ENCODE measurements at regions of chr12 and their contacts with region 1.

Region 1: GRCh38 chr12:98490501-98491453 is 24.6 kb upstream of the TMPO start:
- DNase-seq: peak; percentile 90
- ATAC-seq: peak; percentile 87
- H3K4me3 ChIP-seq: peak overlapping the region; percentile 31 to 60 (median 34); a peak in 5 of 6 replicates
- H3K27ac ChIP-seq: peak overlapping the region; percentile 76
- H3K4me1 ChIP-seq: peaks cover 56% of the 10 kb centered on the region
- H3K27me3 ChIP-seq: no peaks in the 10 kb centered on the region
- CTCF ChIP-seq: peak; percentile 93
- EP300 ChIP-seq: peak in 1 of 2 experiments; percentile 48; a peak in 2 of 4 replicates
- POLR2A ChIP-seq: peak; percentile 54; a peak in 1 of 4 replicates
- RAD21 ChIP-seq: peak; percentile 78

Region 2: GRCh38 chr12:98431089-98431488 is 59.7 kb before region 1 on chr12:
- CTCF ChIA-PET with region 1: no interaction called
- POLR2A ChIA-PET with region 1: no interaction called
- in situ Hi-C with region 1: no loop called
- intact Hi-C with region 1: no loop called
- DNase-seq: no peak
- ATAC-seq: no peak
- H3K4me3 ChIP-seq: no peak overlapping the region
- H3K27ac ChIP-seq: no peak overlapping the region
- H3K4me1 ChIP-seq: no peaks in the 10 kb centered on the region
- H3K27me3 ChIP-seq: no peaks in the 10 kb centered on the region
- CTCF ChIP-seq: no peak
- EP300 ChIP-seq: no peak
- POLR2A ChIP-seq: no peak
- RAD21 ChIP-seq: no peak

Region 3: DNA sequence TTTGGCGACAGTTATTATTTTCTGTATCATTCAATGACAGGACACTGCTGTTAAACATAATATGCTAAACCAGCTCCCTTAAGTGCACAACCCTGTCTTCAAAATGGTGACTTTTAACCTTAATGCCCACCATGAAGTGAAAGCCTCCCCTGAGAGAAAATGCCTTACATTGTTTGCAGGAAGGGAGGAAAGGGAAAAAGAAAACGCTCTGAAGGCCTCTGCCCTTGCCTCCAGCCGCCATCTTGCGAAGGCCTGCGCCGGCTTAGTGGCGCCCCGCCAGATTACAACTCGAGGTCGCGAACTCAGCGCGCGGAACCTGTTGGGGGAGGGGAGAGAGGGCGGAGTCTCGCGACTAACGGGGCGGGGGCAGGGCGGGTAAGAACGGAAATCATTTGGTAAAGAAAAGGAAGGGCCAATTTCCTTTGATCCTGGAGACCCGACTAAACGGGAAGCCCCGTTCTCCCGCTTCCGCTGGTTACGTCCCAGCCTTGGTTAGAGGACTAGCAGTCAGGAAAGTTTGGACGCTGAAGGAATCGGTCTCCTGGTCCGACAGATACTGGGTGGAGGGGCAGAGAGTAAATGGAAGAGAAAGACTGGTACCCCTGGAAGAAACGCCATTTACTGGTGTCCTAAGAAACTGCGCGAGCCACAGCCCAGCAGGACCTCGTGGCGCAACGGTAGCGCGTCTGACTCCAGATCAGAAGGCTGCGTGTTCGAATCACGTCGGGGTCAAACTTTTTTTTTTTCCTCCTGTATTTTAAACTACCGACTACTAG is 13.0 kb after region 1 on chr12:
- CTCF ChIA-PET with region 1: interaction called, 6 read pairs
- POLR2A ChIA-PET with region 1: interaction called, 21 read pairs
- in situ Hi-C with region 1: no loop called
- intact Hi-C with region 1: loop called (anchors 1 kb)
- DNase-seq: peak; percentile 84
- ATAC-seq: peak; percentile 58
- H3K4me3 ChIP-seq: peak overlapping the region; percentile 72 to 77 (median 77)
- H3K27ac ChIP-seq: peak overlapping the region; percentile 99
- H3K4me1 ChIP-seq: peaks cover 39% of the 10 kb centered on the region
- H3K27me3 ChIP-seq: no peaks in the 10 kb centered on the region; a peak in 1 of 5 replicates
- CTCF ChIP-seq: peak; percentile 38
- EP300 ChIP-seq: peak in 1 of 2 experiments; percentile 25; a peak in 3 of 4 replicates
- POLR2A ChIP-seq: peak; percentile 65 to 74
- RAD21 ChIP-seq: peak; percentile 4; the same call in 1 of the 2 replicates

Region 4: GRCh38 chr12:98516184-98516873 is 25.6 kb after region 1 on chr12:
- CTCF ChIA-PET with region 1: interaction called, 21 read pairs
- POLR2A ChIA-PET with region 1: interaction called, 7 read pairs
- in situ Hi-C with region 1: no loop called
- intact Hi-C with region 1: loop called (anchors 1 kb)
- DNase-seq: peak; percentile 88
- ATAC-seq: peak; percentile 52
- H3K4me3 ChIP-seq: peak overlapping the region; percentile 82 to 94 (median 84)
- H3K27ac ChIP-seq: peak overlapping the region; percentile 99
- H3K4me1 ChIP-seq: peaks cover 41% of the 10 kb centered on the region
- H3K27me3 ChIP-seq: no peaks in the 10 kb centered on the region; a peak in 1 of 5 replicates
- CTCF ChIP-seq: peak; percentile 69
- EP300 ChIP-seq: no peak; a peak in 1 of 4 replicates
- POLR2A ChIP-seq: peak; percentile 17 to 45; a peak in 1 of 4 replicates
- RAD21 ChIP-seq: peak; percentile 58

Region 5: GRCh38 chr12:98532681-98533304 is 42.0 kb after region 1 on chr12:
- CTCF ChIA-PET with region 1: interaction called, 8 read pairs
- POLR2A ChIA-PET with region 1: no interaction called
- in situ Hi-C with region 1: no loop called
- intact Hi-C with region 1: loop called (anchors 1 kb)
- DNase-seq: peak; percentile 59
- ATAC-seq: peak; percentile 81
- H3K4me3 ChIP-seq: no peak overlapping the region
- H3K27ac ChIP-seq: no peak overlapping the region
- H3K4me1 ChIP-seq: peaks cover 17% of the 10 kb centered on the region
- H3K27me3 ChIP-seq: no peaks in the 10 kb centered on the region
- CTCF ChIP-seq: peak; percentile 45
- EP300 ChIP-seq: no peak
- POLR2A ChIP-seq: no peak
- RAD21 ChIP-seq: peak; percentile 18; the same call in 1 of the 2 replicates

Region 6: DNA sequence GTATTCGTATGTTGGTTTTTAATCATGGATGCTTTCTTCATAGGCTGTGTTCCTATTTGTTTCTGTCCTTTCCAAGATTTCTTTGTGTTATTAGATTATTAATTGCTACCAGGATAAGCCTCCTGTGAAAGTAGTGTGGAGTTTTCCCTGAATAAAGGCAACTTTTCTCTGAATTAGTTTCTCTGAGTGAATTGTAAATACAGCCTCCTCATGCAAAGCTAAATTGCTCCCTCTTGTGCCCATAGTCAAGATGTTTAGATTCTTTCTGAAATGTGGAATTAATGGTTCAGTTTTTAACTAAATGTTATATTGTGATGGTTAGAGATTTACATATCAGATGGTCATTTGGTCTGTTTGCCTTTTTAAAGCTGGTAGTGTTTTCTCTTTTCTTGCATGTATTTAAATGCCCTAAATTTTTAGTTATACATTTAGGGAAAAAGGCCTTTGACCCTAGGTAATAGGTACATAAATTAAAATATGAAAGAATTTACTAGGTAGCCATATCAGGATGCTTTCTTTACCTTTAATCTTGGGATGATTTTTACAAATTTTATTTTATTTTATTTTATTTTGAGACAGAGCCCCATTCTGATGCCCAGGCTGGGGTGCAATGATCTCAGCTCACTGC is 163.2 kb after region 1 on chr12:
- CTCF ChIA-PET with region 1: interaction called, 3 read pairs
- POLR2A ChIA-PET with region 1: no interaction called
- in situ Hi-C with region 1: no loop called
- intact Hi-C with region 1: loop called (anchors 1 kb)
- DNase-seq: peak; percentile 68
- ATAC-seq: peak; percentile 49; the same call in 2 of the 3 replicates
- H3K4me3 ChIP-seq: no peak overlapping the region
- H3K27ac ChIP-seq: no peak overlapping the region
- H3K4me1 ChIP-seq: no peaks in the 10 kb centered on the region
- H3K27me3 ChIP-seq: no peaks in the 10 kb centered on the region
- CTCF ChIP-seq: peak; percentile 65
- EP300 ChIP-seq: no peak
- POLR2A ChIP-seq: no peak
- RAD21 ChIP-seq: peak; percentile 68